ENCODE measurements at regions of chr11 and their contacts with region 1.

Region 1: DNA sequence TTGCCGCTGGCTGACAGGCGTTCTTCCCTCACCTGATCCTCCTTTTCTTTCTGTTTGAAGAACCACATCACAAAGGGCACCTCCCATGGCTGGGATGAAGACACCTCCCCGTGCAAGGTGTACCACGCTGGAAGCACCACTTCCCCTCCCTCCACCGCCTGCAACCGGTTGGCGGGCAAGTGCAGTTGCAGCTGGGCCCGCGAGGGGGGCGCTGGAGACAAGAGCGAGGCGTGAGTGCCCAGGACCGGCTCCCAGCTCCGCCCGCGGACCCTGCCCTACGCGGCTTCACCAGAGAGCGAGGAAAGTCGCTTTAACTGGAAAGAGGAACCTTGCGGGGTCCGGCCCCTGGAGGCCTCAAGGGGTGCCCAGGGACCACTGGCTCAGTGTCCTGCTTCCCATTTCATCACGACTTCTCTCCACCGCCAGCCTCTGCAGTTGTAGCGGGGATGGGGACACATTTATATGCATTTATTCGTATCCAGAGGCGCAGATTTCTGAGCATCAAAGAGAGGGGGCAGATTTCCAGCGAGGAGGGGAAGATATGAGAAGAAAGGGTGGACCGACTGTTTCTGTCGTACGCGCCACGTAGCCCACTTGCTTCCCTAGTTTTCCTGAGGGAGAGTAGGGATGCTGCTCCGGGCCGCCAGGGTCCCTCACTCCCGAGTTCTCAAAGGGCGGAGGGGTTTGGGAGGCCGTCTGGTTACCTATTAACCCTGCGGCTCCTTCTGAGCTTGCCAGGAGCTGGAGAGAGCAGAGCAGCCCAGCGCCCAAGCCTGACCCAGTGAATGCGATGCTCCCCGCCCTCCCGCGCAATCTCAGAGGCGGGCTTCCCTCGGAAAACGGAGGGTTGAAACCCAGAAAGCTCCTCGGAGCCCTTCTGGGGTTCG is 3.5 kb downstream of the ESAM start:
- DNase-seq: peak; percentile 39 to 79 (median 65)
- ATAC-seq: peak; percentile 64 to 75
- H3K4me3 Mint-ChIP-seq: peak overlapping the region; percentile 63 to 88 (median 76)
- H3K27ac Mint-ChIP-seq: peak overlapping the region in 3 of 10 donors; percentile 53 to 78 (median 73)
- H3K4me1 Mint-ChIP-seq: peaks cover 13 to 42% (median 39%) of the 10 kb centered on the region in 4 donors
- H3K27me3 Mint-ChIP-seq: peaks cover 24 to 59% (median 31%) of the 10 kb centered on the region in 5 donors

Region 2: GRCh38 chr11:124746621-124747243 is 11.8 kb before region 1 on chr11:
- POLR2A ChIA-PET with region 1: interaction called, 51 read pairs
- DNase-seq: peak; percentile 67 to 89 (median 78)
- ATAC-seq: peak; percentile 91 to 93
- H3K4me3 Mint-ChIP-seq: peak overlapping the region; percentile 86 to 99 (median 97)
- H3K27ac Mint-ChIP-seq: peak overlapping the region; percentile 77 to 99 (median 96)
- H3K4me1 Mint-ChIP-seq: peaks cover 5 to 36% (median 20%) of the 10 kb centered on the region in 4 donors
- H3K27me3 Mint-ChIP-seq: peaks cover 0 to 2% (median 2%) of the 10 kb centered on the region in 5 donors

Region 3: GRCh38 chr11:124800226-124800929 is 41.8 kb after region 1 on chr11 and contains the start of gene MSANTD2:
- POLR2A ChIA-PET with region 1: interaction called, 11 read pairs
- DNase-seq: peak; percentile 57 to 83 (median 76)
- ATAC-seq: peak; percentile 83 to 88
- H3K4me3 Mint-ChIP-seq: peak within 1 kb of the TSS; percentile 87 to 98 (median 95)
- H3K27ac Mint-ChIP-seq: peak within 1 kb of the TSS; percentile 91 to 99 (median 96)
- H3K4me1 Mint-ChIP-seq: peaks cover 15 to 34% (median 23%) of the 10 kb centered on the region in 4 donors
- H3K27me3 Mint-ChIP-seq: peaks cover 0 to 2% (median 0%) of the 10 kb centered on the region in 5 donors
- polyA plus RNA-seq, gene MSANTD2: 3.5 to 4.2 (median 4.0) TPM

Region 4: GRCh38 chr11:124812876-124813275 is 54.3 kb after region 1 on chr11:
- POLR2A ChIA-PET with region 1: no interaction called
- DNase-seq: no peak
- ATAC-seq: no peak
- H3K4me3 Mint-ChIP-seq: no peak overlapping the region
- H3K27ac Mint-ChIP-seq: no peak overlapping the region
- H3K4me1 Mint-ChIP-seq: no peaks in the 10 kb centered on the region
- H3K27me3 Mint-ChIP-seq: peaks cover 22 to 48% (median 34%) of the 10 kb centered on the region in 5 donors

Region 5: GRCh38 chr11:124829986-124830385 is 71.4 kb after region 1 on chr11:
- POLR2A ChIA-PET with region 1: no interaction called
- DNase-seq: no peak
- ATAC-seq: no peak
- H3K4me3 Mint-ChIP-seq: no peak overlapping the region
- H3K27ac Mint-ChIP-seq: no peak overlapping the region
- H3K4me1 Mint-ChIP-seq: no peaks in the 10 kb centered on the region
- H3K27me3 Mint-ChIP-seq: peaks cover 6 to 32% (median 21%) of the 10 kb centered on the region in 5 donors

Region 6: GRCh38 chr11:124920870-124921609 is 162.5 kb after region 1 on chr11:
- POLR2A ChIA-PET with region 1: interaction called, 10 read pairs
- DNase-seq: peak; percentile 73 to 96 (median 83)
- ATAC-seq: peak; percentile 86 to 92
- H3K4me3 Mint-ChIP-seq: peak overlapping the region; percentile 64 to 88 (median 83)
- H3K27ac Mint-ChIP-seq: peak overlapping the region in 9 of 10 donors; percentile 75 to 92 (median 83)
- H3K4me1 Mint-ChIP-seq: peaks cover 21 to 37% (median 32%) of the 10 kb centered on the region in 4 donors
- H3K27me3 Mint-ChIP-seq: peaks cover 0 to 9% (median 0%) of the 10 kb centered on the region in 5 donors

Measured in naive thymus-derived CD8-positive, alpha-beta T cell (primary cell).